ENCODE measurements at regions of chr9 and their contacts with region 1.

Region 1: GRCh38 chr9:93549611-93550010 is 26.8 kb upstream of the PHF2 start:
- DNase-seq: no peak
- ATAC-seq: peak in 1 of 2 donors; percentile 42

Region 2: GRCh38 chr9:93159601-93160471 is 389.8 kb before region 1 on chr9:
- intact Hi-C with region 1: loop called in 1 of 2 experiments (anchors 10 kb)
- DNase-seq: peak; percentile 84
- ATAC-seq: peak; percentile 94 to 97

Region 3: GRCh38 chr9:93480728-93481324 is 68.8 kb before region 1 on chr9:
- intact Hi-C with region 1: no loop called
- DNase-seq: no peak
- ATAC-seq: peak; percentile 58 to 69

Measured in left cardiac atrium (tissue), 4 donors.